ENCODE measurements at regions of chr18 and their contacts with region 1.

Region 1: GRCh38 chr18:5237723-5238370 is 40.8 kb upstream of the AKAIN1 start:
- DNase-seq: peak; percentile 68 to 97 (median 86)
- ATAC-seq: peak; percentile 87 to 88
- H3K4me3 Mint-ChIP-seq: peak overlapping the region; percentile 92 to 97 (median 94)
- H3K27ac Mint-ChIP-seq: peak overlapping the region; percentile 97 to 99 (median 98)
- H3K4me1 Mint-ChIP-seq: peaks cover 19 to 58% (median 43%) of the 10 kb centered on the region in 4 donors
- H3K27me3 Mint-ChIP-seq: peaks cover 0 to 6% (median 0%) of the 10 kb centered on the region in 5 donors

Region 2: DNA sequence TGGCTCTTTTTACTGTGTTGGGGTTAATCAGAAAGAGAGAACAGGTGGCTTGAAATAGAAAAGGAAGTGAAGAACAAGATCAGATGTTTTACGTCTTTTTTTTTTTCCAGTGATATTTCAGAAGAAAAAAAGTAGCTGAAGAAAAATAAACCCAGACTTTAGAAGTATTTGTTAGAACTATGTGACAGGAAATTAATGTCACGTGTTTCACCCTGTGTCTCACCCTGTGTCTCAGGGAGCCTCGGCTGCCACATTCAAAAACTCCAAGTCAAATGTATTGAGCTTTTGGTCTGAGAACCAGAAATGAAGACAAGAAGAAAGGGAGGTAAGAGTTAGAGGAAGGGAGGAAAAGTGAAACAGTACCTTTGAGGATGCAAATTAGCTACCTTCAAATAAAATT is 78.8 kb before region 1 on chr18:
- POLR2A ChIA-PET with region 1: interaction called, 40 read pairs
- DNase-seq: peak in 8 of 10 donors; percentile 20 to 71 (median 46)
- ATAC-seq: peak; percentile 94 to 97
- H3K4me3 Mint-ChIP-seq: peak overlapping the region; percentile 38 to 89 (median 78)
- H3K27ac Mint-ChIP-seq: peak overlapping the region; percentile 84 to 97 (median 94)
- H3K4me1 Mint-ChIP-seq: peaks cover 25 to 40% (median 37%) of the 10 kb centered on the region in 4 donors
- H3K27me3 Mint-ChIP-seq: no peaks in the 10 kb centered on the region

Region 3: DNA sequence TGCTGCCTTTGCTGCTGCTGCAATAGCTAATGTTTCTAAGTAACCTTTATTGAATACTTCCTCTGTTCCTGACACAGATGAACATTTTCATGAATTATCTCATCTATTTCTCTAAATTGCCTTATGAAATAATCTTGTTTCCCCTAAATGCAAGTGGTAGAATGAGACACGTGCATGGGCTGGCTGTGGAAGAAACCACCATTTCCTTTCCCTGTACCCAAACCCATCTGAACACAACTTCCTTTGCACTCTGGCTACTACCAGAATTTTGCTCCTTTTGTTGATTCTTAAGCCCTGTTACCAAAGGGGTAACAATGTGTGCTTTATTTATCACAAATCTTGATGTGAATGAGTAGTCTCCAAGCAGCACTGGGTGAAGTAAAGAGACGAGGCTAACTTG is 70.0 kb before region 1 on chr18:
- POLR2A ChIA-PET with region 1: interaction called, 12 read pairs
- DNase-seq: peak in 4 of 10 donors; percentile 9 to 51 (median 32)
- ATAC-seq: peak; percentile 75 to 92
- H3K4me3 Mint-ChIP-seq: peak overlapping the region; percentile 29 to 83 (median 70)
- H3K27ac Mint-ChIP-seq: peak overlapping the region; percentile 81 to 93 (median 88)
- H3K4me1 Mint-ChIP-seq: peaks cover 26 to 36% (median 32%) of the 10 kb centered on the region in 4 donors
- H3K27me3 Mint-ChIP-seq: peaks cover 0 to 1% (median 0%) of the 10 kb centered on the region in 5 donors

Measured in naive thymus-derived CD8-positive, alpha-beta T cell (primary cell).